ENCODE measurements at regions of chr10 and their contacts with region 1.

Region 1: DNA sequence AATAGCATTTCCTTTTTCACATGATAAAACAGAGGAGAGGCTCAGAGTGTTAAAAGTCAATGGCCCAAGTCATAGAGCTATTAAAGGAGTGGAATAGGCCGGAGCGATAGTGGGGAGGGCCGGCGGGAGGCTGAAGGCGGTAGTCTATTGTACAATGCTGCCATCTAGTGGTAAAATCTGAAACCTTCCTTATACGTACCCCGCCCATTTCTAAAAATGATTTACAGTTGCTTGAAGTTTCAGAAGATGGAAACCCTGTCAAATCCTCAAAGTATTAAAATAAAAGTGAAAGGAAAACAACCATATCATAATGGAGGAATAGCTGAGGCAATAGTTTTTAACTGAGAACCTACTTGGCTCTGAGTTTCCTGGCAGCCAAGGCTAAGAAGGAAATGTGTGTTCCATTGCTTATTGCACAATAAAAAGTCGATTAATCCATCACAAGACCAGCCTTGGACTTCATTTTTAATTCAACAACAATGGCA is 209.1 kb downstream of the CCSER2 start:
- DNase-seq: no peak
- ATAC-seq: peak; percentile 90

Region 2: GRCh38 chr10:84264611-84265141 is 272.8 kb before region 1 on chr10:
- intact Hi-C with region 1: loop called (anchors 5 kb)
- DNase-seq: peak; percentile 83
- ATAC-seq: peak; percentile 91

Region 3: DNA sequence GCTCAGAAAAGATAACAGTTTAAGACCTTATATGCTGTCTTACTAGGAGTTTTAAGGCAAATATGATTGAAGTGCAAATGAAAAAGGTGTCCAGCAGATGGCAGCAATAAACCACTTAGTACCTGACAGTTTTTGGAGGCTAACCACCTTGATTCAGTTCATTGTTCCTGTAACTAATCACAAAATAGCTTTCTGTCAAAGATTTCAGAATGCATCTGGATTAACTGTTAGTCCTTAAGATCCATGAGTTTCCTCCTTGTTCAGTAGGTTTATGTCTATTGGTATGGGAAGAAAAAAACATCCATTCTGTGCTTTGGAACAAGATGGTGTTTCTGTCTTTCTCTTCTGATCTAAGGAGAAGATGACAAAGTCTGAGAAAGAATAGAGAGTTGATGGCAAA is 162.5 kb before region 1 on chr10:
- intact Hi-C with region 1: loop called (anchors 10 kb)
- DNase-seq: no peak
- ATAC-seq: no peak

Region 4: DNA sequence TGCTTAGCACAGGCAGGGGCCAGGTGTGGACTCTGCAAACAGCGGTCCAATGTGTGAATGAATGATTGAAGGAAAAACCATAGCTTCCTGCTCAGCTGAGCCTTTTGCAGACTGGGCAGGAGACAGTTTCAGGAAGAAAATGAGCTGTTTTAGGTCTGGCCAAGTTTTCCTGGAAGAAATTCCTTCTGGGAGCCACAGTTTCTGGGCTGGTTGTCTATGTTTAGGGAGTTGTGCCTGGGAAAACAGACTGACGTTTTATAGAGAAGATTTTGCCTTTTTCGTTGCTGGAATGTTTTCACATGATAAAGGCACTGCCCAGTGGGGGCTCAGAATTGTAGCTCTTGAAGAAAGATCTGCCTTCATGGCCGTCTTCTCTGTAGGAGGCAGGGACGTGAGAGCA is 46.0 kb after region 1 on chr10:
- intact Hi-C with region 1: no loop called
- DNase-seq: no peak
- ATAC-seq: no peak

Region 5: GRCh38 chr10:86376852-86377796 is 1839.6 kb after region 1 on chr10:
- intact Hi-C with region 1: loop called (anchors 5 kb)
- DNase-seq: peak; percentile 86
- ATAC-seq: peak; percentile 86